ENCODE measurements at regions of chr5 and their contacts with region 1.

Region 1: GRCh38 chr5:179858586-179859427 is at the start of gene MRNIP:
- DNase-seq: peak; percentile 66 to 94 (median 90)
- ATAC-seq: peak; percentile 95
- H3K4me3 ChIP-seq: peak within 1 kb of the TSS; percentile 94 to 98
- H3K4me3 Mint-ChIP-seq: peak within 1 kb of the TSS; percentile 96
- H3K27ac ChIP-seq: peak within 1 kb of the TSS; percentile 57 to 88
- H3K27ac Mint-ChIP-seq: peak within 1 kb of the TSS; percentile 92
- H3K4me1 ChIP-seq: peaks cover 8% of the 10 kb centered on the region
- H3K4me1 Mint-ChIP-seq: peaks cover 22% of the 10 kb centered on the region
- H3K27me3 ChIP-seq: no peaks in the 10 kb centered on the region
- H3K27me3 Mint-ChIP-seq: no peaks in the 10 kb centered on the region
- CTCF ChIP-seq: no peak
- total RNA-seq, gene MRNIP: 30.0 to 38.5 TPM

Region 2: DNA sequence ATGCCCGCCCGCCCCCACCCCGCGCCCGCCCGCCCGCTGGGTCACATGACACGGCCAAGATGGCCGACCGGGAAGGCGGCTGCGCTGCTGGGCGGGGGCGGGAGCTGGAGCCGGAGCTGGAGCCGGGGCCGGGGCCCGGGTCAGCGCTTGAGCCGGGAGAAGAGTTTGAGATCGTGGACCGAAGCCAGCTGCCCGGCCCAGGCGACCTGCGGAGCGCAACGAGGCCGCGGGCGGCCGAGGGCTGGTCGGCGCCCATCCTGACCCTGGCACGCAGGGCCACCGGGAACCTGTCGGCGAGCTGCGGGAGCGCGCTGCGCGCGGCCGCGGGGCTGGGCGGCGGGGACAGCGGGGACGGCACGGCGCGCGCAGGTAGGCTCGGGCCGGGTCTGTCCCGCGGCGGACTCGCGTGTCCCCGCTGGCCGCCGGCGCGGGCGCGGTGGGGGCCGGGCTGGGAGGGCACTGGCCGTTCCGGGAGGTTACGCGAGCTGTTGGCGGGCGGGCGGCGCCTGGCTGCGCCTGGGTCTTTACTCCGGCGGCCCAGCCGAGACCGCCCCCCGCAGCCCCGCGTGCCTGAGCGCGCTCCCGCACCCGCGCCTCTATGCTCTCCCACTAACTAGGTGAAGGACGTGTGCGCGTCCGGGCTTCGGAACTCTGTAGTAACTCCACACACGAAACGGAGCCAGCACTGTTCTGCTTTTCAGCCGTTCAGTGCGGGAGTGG is 308.1 kb before region 1 on chr5 and contains the start of gene RUFY1:
- CTCF ChIA-PET with region 1: no interaction called
- POLR2A ChIA-PET with region 1: no interaction called
- intact Hi-C with region 1: loop called in 1 of 2 experiments (anchors 2 kb)
- DNase-seq: peak; percentile 69 to 91 (median 82)
- ATAC-seq: peak; percentile 71
- H3K4me3 ChIP-seq: peak within 1 kb of the TSS; percentile 89 to 98
- H3K4me3 Mint-ChIP-seq: peak within 1 kb of the TSS; percentile 97
- H3K27ac ChIP-seq: peak within 1 kb of the TSS; percentile 76 to 80
- H3K27ac Mint-ChIP-seq: peak within 1 kb of the TSS; percentile 97
- H3K4me1 ChIP-seq: peaks cover 26% of the 10 kb centered on the region
- H3K4me1 Mint-ChIP-seq: peaks cover 42% of the 10 kb centered on the region
- H3K27me3 ChIP-seq: no peaks in the 10 kb centered on the region
- H3K27me3 Mint-ChIP-seq: no peaks in the 10 kb centered on the region
- CTCF ChIP-seq: no peak
- total RNA-seq, gene RUFY1: 19.6 to 19.8 TPM

Region 3: GRCh38 chr5:179697993-179698934 is 160.5 kb before region 1 on chr5:
- CTCF ChIA-PET with region 1: no interaction called
- POLR2A ChIA-PET with region 1: no interaction called
- intact Hi-C with region 1: loop called in 1 of 2 experiments (anchors 1 kb)
- DNase-seq: peak; percentile 97 to 100 (median 98)
- ATAC-seq: peak; percentile 87
- H3K4me3 ChIP-seq: peak overlapping the region; percentile 84 to 89
- H3K4me3 Mint-ChIP-seq: peak overlapping the region; percentile 99
- H3K27ac ChIP-seq: peak overlapping the region; percentile 92 to 94
- H3K27ac Mint-ChIP-seq: peak overlapping the region; percentile 100
- H3K4me1 ChIP-seq: peaks cover 32% of the 10 kb centered on the region
- H3K4me1 Mint-ChIP-seq: peaks cover 40% of the 10 kb centered on the region
- H3K27me3 ChIP-seq: no peaks in the 10 kb centered on the region
- H3K27me3 Mint-ChIP-seq: no peaks in the 10 kb centered on the region
- CTCF ChIP-seq: no peak

Region 4: DNA sequence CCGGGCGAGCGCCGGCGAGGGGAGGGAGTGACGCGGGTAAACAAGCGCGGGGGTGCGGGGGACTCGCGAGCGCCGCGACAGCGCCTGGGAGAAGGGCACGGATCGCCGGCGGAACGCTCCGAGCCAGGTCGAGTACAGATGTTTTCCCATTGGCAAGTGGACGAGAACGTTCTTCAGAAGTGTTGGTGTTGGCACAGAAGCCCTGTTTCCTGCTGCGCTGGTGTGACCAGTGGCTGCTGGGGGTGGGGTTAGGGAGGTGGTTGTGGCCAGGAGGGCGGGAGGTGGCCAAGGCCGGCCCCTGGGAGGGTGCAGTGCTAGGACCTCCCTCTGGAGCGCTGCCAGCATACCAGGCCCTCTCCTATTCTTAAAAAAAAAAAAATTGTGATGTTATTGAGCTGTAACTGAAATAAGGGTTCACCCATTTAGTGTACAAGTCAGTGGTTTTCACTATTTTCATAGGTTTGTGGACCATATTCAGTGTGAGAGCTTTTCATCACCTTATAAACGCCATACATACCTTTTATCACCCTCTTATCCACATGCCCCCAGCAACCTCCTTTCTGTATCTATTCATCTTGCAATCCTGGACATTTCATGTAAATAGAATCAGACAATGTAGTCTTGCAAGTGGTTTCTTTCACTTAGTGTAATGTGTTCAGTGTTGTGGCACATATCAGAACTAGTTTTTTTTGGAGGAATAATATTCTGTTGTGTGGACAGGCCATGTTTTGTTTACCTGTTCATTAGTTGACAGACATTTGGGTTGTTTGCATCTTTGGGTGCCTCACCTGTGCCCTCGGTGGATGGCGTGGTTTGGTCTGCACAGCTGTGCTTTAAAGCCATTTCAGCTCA is 37.0 kb before region 1 on chr5:
- CTCF ChIA-PET with region 1: no interaction called
- POLR2A ChIA-PET with region 1: interaction called, 15 read pairs
- intact Hi-C with region 1: loop called (anchors 1 to 5 kb)
- DNase-seq: peak; percentile 79 to 94 (median 88)
- ATAC-seq: peak; percentile 63
- H3K4me3 ChIP-seq: peak overlapping the region; percentile 81 to 94
- H3K4me3 Mint-ChIP-seq: peak overlapping the region; percentile 95
- H3K27ac ChIP-seq: peak overlapping the region; percentile 92 to 99
- H3K27ac Mint-ChIP-seq: peak overlapping the region; percentile 96
- H3K4me1 ChIP-seq: peaks cover 47% of the 10 kb centered on the region
- H3K4me1 Mint-ChIP-seq: peaks cover 59% of the 10 kb centered on the region
- H3K27me3 ChIP-seq: peaks cover 0 to 2% of the 10 kb centered on the region in 2 experiments
- H3K27me3 Mint-ChIP-seq: no peaks in the 10 kb centered on the region
- CTCF ChIP-seq: no peak

Region 5: GRCh38 chr5:179878222-179879009 is 19.6 kb after region 1 on chr5:
- CTCF ChIA-PET with region 1: no interaction called
- POLR2A ChIA-PET with region 1: no interaction called
- intact Hi-C with region 1: no loop called
- DNase-seq: no peak
- ATAC-seq: no peak
- H3K4me3 ChIP-seq: no peak overlapping the region
- H3K4me3 Mint-ChIP-seq: no peak overlapping the region
- H3K27ac ChIP-seq: no peak overlapping the region
- H3K27ac Mint-ChIP-seq: no peak overlapping the region
- H3K4me1 ChIP-seq: no peaks in the 10 kb centered on the region
- H3K4me1 Mint-ChIP-seq: no peaks in the 10 kb centered on the region
- H3K27me3 ChIP-seq: no peaks in the 10 kb centered on the region
- H3K27me3 Mint-ChIP-seq: no peaks in the 10 kb centered on the region
- CTCF ChIP-seq: no peak

Region 6: GRCh38 chr5:179907570-179908324 is 48.9 kb after region 1 on chr5 and contains the start of gene TBC1D9B:
- CTCF ChIA-PET with region 1: interaction called, 3 read pairs
- POLR2A ChIA-PET with region 1: no interaction called
- intact Hi-C with region 1: loop called (anchors 1 kb)
- DNase-seq: peak; percentile 37 to 90 (median 67)
- ATAC-seq: peak; percentile 90
- H3K4me3 ChIP-seq: peak within 1 kb of the TSS; percentile 52 to 57
- H3K4me3 Mint-ChIP-seq: peak within 1 kb of the TSS; percentile 86
- H3K27ac ChIP-seq: peak within 1 kb of the TSS in 1 of 2 experiments; percentile 54
- H3K27ac Mint-ChIP-seq: peak within 1 kb of the TSS; percentile 79
- H3K4me1 ChIP-seq: peaks cover 17% of the 10 kb centered on the region
- H3K4me1 Mint-ChIP-seq: peaks cover 15% of the 10 kb centered on the region
- H3K27me3 ChIP-seq: no peaks in the 10 kb centered on the region
- H3K27me3 Mint-ChIP-seq: no peaks in the 10 kb centered on the region
- CTCF ChIP-seq: peak; percentile 14
- total RNA-seq, gene TBC1D9B: 39.7 to 48.1 TPM